CD14-positive monocyte (primary cell): ENCODE measurements at regions of chr5 and their contacts with region 1.

Region 1: DNA sequence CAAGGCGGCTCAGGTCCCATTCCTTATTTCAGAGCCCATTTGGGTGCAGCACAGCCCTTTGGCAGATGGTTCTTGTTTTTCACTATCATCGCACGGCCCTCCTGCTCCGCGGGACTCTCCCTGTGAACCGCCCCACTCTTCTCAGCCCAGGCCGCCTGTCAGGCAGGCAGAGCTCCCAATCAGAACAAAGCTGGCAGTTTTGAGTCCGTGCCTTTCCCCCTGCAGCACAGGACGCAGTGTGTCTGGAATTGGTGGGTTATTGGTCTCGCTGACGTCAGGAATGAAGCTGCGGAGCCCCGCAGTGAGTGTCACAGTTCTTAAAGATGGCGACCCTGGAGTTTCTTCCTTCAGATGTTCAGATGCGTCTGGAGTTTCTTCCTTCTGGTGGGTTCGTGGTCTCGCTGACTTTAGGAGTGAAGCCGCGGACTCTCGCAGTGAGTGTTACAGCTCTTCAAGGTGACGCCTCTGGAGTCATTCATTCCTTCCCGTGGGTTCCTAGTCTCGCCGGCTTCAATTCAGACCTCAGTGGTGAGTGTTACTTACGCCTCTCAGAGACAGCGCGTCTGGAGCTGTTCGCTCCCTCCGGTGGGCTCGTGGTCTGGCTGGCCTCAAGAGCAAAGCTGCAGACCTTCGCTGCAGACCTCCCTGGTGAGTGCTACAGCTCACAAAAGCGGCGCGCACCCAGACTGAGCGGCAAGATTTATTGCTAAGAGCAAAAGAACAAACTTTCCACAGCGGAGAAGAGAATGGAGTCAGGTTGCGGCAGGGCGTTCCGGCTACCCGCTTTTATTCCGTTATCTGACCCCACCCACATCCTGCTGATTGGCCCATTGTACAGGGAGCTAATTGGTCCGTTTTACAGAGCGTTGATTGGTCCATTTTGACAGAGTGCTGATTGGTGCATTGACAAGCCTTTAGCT is 7.5 kb downstream of the ZDHHC11B start:
- DNase-seq: no peak
- H3K4me3 ChIP-seq: no peak overlapping the region
- H3K4me3 Mint-ChIP-seq: no peak overlapping the region
- H3K27ac ChIP-seq: no peak overlapping the region
- H3K27ac Mint-ChIP-seq: no peak overlapping the region
- H3K4me1 ChIP-seq: no peaks in the 10 kb centered on the region
- H3K4me1 Mint-ChIP-seq: no peaks in the 10 kb centered on the region
- H3K27me3 ChIP-seq: no peaks in the 10 kb centered on the region
- H3K27me3 Mint-ChIP-seq: peaks cover 4% of the 10 kb centered on the region in 3 donors
- CTCF ChIP-seq: no peak

Region 2: DNA sequence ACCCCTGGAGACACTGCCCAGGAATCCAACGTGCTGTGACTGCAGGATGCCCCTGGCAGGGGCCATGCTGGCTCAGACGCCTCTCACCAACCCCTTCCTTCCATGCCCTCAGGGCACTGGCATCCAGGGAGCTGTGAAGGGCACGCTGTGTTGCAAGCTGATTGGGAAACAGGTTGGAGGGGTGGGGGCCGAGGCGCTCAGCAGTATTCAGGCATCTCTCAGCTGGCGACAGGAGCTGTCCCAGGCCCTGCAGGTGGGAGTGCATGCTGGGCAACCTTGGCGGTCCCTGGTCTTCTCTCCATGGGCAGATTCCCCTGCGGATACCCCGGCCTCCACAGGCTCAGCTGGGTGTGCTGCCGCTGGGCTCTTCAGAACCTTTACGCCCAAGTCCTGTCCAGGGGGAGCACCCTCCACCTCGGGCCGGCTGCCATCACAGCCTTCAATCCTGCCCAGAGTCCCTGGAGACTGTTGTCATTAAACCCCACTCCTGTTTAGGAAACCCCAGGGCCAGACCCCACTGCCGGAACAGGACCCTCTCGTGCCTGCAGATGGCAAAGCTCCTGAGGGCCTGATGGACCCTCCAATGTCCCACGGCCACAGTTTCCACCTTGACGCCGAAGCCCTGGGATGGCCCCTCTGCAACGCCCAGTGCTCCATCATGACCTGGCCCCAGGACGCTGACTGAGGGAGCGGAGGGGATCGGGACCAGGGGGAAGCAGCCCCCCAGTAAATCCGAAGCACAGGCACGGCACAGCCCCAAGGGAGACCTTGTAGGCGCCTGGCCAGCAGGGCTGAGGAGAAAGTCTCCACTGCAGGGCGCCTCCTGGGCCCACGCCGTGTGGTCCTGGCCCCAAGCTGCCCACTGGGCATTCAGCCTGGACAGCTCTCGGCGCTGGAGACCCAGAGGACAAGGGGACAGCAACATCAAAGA is 93.2 kb before region 1 on chr5:
- intact Hi-C with region 1: loop called in 1 of 2 experiments (anchors 2 kb)
- DNase-seq: peak in 1 of 3 donors; percentile 2
- H3K4me3 ChIP-seq: no peak overlapping the region
- H3K4me3 Mint-ChIP-seq: no peak overlapping the region
- H3K27ac ChIP-seq: no peak overlapping the region
- H3K27ac Mint-ChIP-seq: no peak overlapping the region
- H3K4me1 ChIP-seq: no peaks in the 10 kb centered on the region
- H3K4me1 Mint-ChIP-seq: no peaks in the 10 kb centered on the region
- H3K27me3 ChIP-seq: no peaks in the 10 kb centered on the region
- H3K27me3 Mint-ChIP-seq: peaks cover 1 to 9% (median 3%) of the 10 kb centered on the region in 3 donors
- CTCF ChIP-seq: no peak

Region 3: DNA sequence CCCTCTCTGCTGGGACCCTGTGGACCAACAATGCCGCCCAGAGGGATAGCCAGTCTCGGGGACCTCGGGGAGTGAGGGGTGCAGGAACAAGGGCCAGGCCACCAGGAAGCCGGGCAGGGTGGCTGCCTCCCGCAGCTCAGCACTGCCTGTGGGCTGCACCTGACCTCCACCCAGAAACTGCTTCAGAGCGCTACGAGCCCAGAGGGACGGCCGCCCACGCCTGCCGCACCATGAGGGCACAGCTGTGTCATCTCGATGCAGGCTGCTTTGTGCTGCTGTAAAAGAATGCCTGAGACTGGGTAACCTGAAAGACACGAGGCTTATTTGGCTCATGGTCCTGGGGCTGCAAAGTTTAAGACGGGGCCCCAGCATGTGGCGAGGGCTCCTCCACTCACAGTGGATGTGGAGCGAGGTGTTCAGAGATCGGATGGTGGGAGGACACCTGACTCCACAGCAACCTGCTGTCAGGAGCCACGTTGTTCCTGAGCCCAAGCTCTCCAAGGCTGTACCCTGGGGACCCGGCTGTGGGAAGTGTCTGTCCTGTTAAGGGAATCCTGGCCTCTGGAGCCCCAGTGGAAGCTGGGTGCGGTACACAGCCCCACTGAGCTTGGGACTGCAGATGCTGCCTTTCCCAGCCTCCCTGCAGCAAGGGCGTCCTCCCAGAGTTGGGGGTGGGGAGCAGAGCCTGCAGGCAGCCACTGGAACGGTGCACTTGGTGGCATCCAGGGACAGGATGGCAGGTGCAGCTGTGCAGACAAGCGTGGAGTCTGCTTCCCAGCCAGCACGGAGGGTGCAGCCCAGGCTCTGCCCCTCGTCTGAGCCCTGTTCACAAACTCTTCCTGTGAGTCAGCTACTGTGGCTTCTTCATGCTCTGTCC is 85.6 kb after region 1 on chr5:
- intact Hi-C with region 1: no loop called
- DNase-seq: no peak
- H3K4me3 ChIP-seq: no peak overlapping the region
- H3K4me3 Mint-ChIP-seq: no peak overlapping the region
- H3K27ac ChIP-seq: no peak overlapping the region
- H3K27ac Mint-ChIP-seq: no peak overlapping the region
- H3K4me1 ChIP-seq: no peaks in the 10 kb centered on the region
- H3K4me1 Mint-ChIP-seq: no peaks in the 10 kb centered on the region
- H3K27me3 ChIP-seq: no peaks in the 10 kb centered on the region
- H3K27me3 Mint-ChIP-seq: no peaks in the 10 kb centered on the region
- CTCF ChIP-seq: no peak